Endothelial cell of umbilical vein (primary cell): ENCODE measurements at regions of chr3 and their contacts with region 1.

Region 1: GRCh38 chr3:52313774-52314188 is 2.3 kb upstream of the DNAH1 start:
- DNase-seq: peak; percentile 78
- H3K4me3 ChIP-seq: no peak overlapping the region
- H3K27ac ChIP-seq: peak overlapping the region; percentile 54
- H3K4me1 ChIP-seq: peaks cover 19% of the 10 kb centered on the region
- H3K27me3 ChIP-seq: no peaks in the 10 kb centered on the region
- CTCF ChIP-seq: no peak
- POLR2A ChIP-seq: no peak

Region 2: GRCh38 chr3:52123106-52123725 is 190.6 kb before region 1 on chr3:
- CTCF ChIA-PET with region 1: no interaction called
- POLR2A ChIA-PET with region 1: no interaction called
- dilution Hi-C with region 1: no loop called
- intact Hi-C with region 1: no loop called
- DNase-seq: peak; percentile 81
- H3K4me3 ChIP-seq: no peak overlapping the region
- H3K27ac ChIP-seq: no peak overlapping the region
- H3K4me1 ChIP-seq: peaks cover 16% of the 10 kb centered on the region
- H3K27me3 ChIP-seq: no peaks in the 10 kb centered on the region
- CTCF ChIP-seq: peak; percentile 97 to 98
- POLR2A ChIP-seq: no peak

Region 3: DNA sequence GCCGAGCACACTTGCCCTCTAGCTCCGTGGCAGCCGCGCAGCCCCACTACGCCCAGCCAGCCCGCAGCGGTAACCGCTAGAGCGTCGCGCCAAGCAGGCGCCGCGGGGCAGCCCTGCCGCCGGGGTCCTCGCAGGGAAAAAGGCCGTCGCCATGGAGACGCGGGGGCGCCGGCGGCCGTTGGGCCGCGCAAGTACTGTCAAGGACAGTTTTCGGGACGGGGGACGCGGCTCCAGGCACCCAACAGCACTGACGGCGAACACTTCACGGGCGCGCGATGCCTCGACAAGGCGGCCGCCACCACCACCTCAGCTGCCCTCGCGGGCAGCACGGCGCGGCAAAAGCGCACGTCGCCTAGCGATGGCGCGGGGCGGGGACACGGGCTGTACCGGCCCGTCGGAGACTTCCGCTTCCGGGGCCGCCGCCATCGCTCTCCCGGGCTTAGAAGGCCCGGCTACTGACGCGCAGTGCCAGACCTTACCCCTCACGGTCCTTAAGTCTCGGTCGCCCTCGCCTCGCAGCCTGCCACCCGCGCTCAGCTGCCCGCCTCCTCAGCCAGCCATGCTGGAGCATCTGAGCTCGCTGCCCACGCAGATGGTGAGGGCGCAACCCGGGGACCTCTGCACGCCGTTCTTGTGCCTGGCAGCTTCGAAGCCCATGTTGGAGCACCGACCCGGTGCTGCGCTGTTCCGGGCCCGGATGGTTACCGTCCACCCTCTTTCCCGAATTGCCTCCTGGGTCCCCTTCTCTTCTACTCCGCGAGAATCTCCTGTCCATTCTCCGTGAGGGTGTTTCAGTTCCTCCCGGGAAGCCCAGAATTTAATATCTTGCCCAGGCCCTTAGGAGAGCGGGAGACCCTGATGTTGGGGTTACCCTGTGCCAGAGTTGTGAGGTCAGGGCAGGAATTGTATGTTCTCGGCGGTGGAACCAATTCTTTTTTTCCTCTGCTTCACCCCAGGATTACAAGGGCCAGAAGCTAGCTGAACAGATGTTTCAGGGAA is 392.2 kb after region 1 on chr3 and contains the starts of genes GLT8D1 and SPCS1:
- CTCF ChIA-PET with region 1: no interaction called
- POLR2A ChIA-PET with region 1: no interaction called
- dilution Hi-C with region 1: no loop called
- intact Hi-C with region 1: no loop called
- DNase-seq: peak; percentile 90
- H3K4me3 ChIP-seq: peak within 1 kb of the TSS; percentile 62 to 94 (median 92)
- H3K27ac ChIP-seq: peak within 1 kb of the TSS; percentile 57
- H3K4me1 ChIP-seq: peaks cover 17% of the 10 kb centered on the region
- H3K27me3 ChIP-seq: no peaks in the 10 kb centered on the region
- CTCF ChIP-seq: no peak
- POLR2A ChIP-seq: peak; percentile 83
- total RNA-seq, gene GLT8D1: 69.9 and 73.5 TPM in 2 replicates
- total RNA-seq, gene SPCS1: 100 and 107 TPM in 2 replicates

Region 4: GRCh38 chr3:52730681-52731080 is 416.9 kb after region 1 on chr3:
- CTCF ChIA-PET with region 1: no interaction called
- POLR2A ChIA-PET with region 1: interaction called, 12 read pairs
- dilution Hi-C with region 1: no loop called
- intact Hi-C with region 1: no loop called
- DNase-seq: peak; percentile 19
- H3K4me3 ChIP-seq: no peak overlapping the region
- H3K27ac ChIP-seq: no peak overlapping the region
- H3K4me1 ChIP-seq: no peaks in the 10 kb centered on the region
- H3K27me3 ChIP-seq: no peaks in the 10 kb centered on the region
- CTCF ChIP-seq: no peak
- POLR2A ChIP-seq: no peak